CD4-positive, alpha-beta T cell (primary cell): ENCODE measurements at regions of chr1 and their contacts with region 1.

Region 1: GRCh38 chr1:156212833-156213643 is at the start of gene PMF1:
- DNase-seq: peak; percentile 90 to 97 (median 94)
- ATAC-seq: peak; percentile 96
- H3K4me3 ChIP-seq: peak within 1 kb of the TSS; percentile 69
- H3K4me3 Mint-ChIP-seq: peak within 1 kb of the TSS; percentile 98
- H3K27ac ChIP-seq: peak within 1 kb of the TSS; percentile 90 to 98
- H3K27ac Mint-ChIP-seq: peak within 1 kb of the TSS; percentile 99
- H3K4me1 ChIP-seq: peaks cover 46% of the 10 kb centered on the region
- H3K4me1 Mint-ChIP-seq: peaks cover 37% of the 10 kb centered on the region
- H3K27me3 ChIP-seq: no peaks in the 10 kb centered on the region
- H3K27me3 Mint-ChIP-seq: no peaks in the 10 kb centered on the region
- CTCF ChIP-seq: no peak
- total RNA-seq, gene PMF1: 58.0 to 61.2 TPM

Region 2: GRCh38 chr1:155925506-155925905 is 287.5 kb before region 1 on chr1:
- CTCF ChIA-PET with region 1: no interaction called
- POLR2A ChIA-PET with region 1: no interaction called
- intact Hi-C with region 1: no loop called
- DNase-seq: no peak
- ATAC-seq: no peak
- H3K4me3 ChIP-seq: no peak overlapping the region
- H3K4me3 Mint-ChIP-seq: no peak overlapping the region
- H3K27ac ChIP-seq: no peak overlapping the region
- H3K27ac Mint-ChIP-seq: no peak overlapping the region
- H3K4me1 ChIP-seq: peaks cover under 1% of the 10 kb centered on the region
- H3K4me1 Mint-ChIP-seq: peaks cover 13% of the 10 kb centered on the region
- H3K27me3 ChIP-seq: no peaks in the 10 kb centered on the region
- H3K27me3 Mint-ChIP-seq: no peaks in the 10 kb centered on the region
- CTCF ChIP-seq: no peak

Region 3: GRCh38 chr1:155978325-155978972 is 234.6 kb before region 1 on chr1 and contains the start of gene ARHGEF2:
- CTCF ChIA-PET with region 1: no interaction called
- POLR2A ChIA-PET with region 1: interaction called, 11 read pairs
- intact Hi-C with region 1: no loop called
- DNase-seq: peak; percentile 42 to 86 (median 75)
- ATAC-seq: peak; percentile 59
- H3K4me3 ChIP-seq: peak within 1 kb of the TSS; percentile 93
- H3K4me3 Mint-ChIP-seq: peak within 1 kb of the TSS; percentile 97
- H3K27ac ChIP-seq: peak within 1 kb of the TSS; percentile 66 to 89
- H3K27ac Mint-ChIP-seq: peak within 1 kb of the TSS; percentile 86
- H3K4me1 ChIP-seq: peaks cover 78% of the 10 kb centered on the region
- H3K4me1 Mint-ChIP-seq: peaks cover 75% of the 10 kb centered on the region
- H3K27me3 ChIP-seq: no peaks in the 10 kb centered on the region
- H3K27me3 Mint-ChIP-seq: no peaks in the 10 kb centered on the region
- CTCF ChIP-seq: peak; percentile 21
- total RNA-seq, gene ARHGEF2: 54.8 to 62.4 TPM

Region 4: GRCh38 chr1:156020292-156021089 is 192.5 kb before region 1 on chr1 and contains the start of gene SSR2:
- CTCF ChIA-PET with region 1: no interaction called
- POLR2A ChIA-PET with region 1: no interaction called
- intact Hi-C with region 1: no loop called
- DNase-seq: peak; percentile 61 to 94 (median 77)
- ATAC-seq: peak; percentile 99
- H3K4me3 ChIP-seq: peak within 1 kb of the TSS; percentile 78
- H3K4me3 Mint-ChIP-seq: peak within 1 kb of the TSS; percentile 100
- H3K27ac ChIP-seq: peak within 1 kb of the TSS; percentile 38 to 77
- H3K27ac Mint-ChIP-seq: peak within 1 kb of the TSS; percentile 91
- H3K4me1 ChIP-seq: peaks cover 18% of the 10 kb centered on the region
- H3K4me1 Mint-ChIP-seq: peaks cover 41% of the 10 kb centered on the region
- H3K27me3 ChIP-seq: no peaks in the 10 kb centered on the region
- H3K27me3 Mint-ChIP-seq: no peaks in the 10 kb centered on the region
- CTCF ChIP-seq: no peak
- total RNA-seq, gene SSR2: 223 to 225 TPM

Region 5: GRCh38 chr1:156160743-156161171 is 52.3 kb before region 1 on chr1:
- CTCF ChIA-PET with region 1: no interaction called
- POLR2A ChIA-PET with region 1: interaction called, 11 read pairs
- intact Hi-C with region 1: no loop called
- DNase-seq: peak in 13 of 14 experiments; percentile 23 to 81 (median 53)
- ATAC-seq: peak; percentile 79
- H3K4me3 ChIP-seq: peak overlapping the region; percentile 53
- H3K4me3 Mint-ChIP-seq: peak overlapping the region; percentile 84
- H3K27ac ChIP-seq: no peak overlapping the region
- H3K27ac Mint-ChIP-seq: peak overlapping the region; percentile 54
- H3K4me1 ChIP-seq: peaks cover 32% of the 10 kb centered on the region
- H3K4me1 Mint-ChIP-seq: peaks cover 53% of the 10 kb centered on the region
- H3K27me3 ChIP-seq: no peaks in the 10 kb centered on the region
- H3K27me3 Mint-ChIP-seq: no peaks in the 10 kb centered on the region
- CTCF ChIP-seq: no peak

Region 6: DNA sequence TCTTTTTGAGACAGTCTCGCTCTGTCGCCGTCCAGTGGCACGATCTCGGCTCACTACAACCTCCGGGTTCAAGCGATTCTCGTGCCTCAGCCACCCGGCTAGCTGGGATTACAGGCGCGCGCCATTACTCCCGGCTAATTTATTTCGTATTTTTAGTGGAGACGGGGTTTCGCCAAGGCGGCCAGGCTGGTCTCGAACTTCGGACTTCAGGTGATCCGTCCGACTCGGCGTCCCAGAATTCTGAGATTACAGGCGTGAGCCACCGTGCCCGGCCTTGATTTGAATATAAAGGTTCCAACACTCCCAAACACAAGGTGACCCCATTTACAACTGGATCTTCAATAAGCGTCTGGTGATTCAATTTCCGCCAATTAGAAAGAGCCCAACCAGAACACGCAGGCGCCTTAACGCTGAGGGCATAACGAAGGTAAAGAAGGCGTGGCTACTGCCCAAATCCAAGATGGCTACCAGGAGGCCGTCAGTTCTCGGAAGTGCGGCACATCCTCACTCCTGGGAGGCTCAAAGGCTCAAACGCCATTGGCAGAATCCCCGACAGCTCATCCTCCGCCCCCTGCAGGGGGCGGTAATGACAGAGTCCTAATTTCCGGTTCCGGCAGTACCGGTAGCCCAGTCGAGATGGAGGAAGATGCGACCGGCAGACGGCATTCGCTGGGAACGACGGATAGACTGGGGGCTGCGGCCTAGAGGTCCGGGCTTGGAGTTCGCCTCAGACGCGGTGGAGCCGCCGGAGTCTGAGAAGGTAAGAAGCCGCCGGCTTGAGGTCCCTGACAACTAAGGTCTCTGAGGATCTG is 19.3 kb before region 1 on chr1 and contains the start of gene SLC25A44:
- CTCF ChIA-PET with region 1: interaction called, 3 read pairs
- POLR2A ChIA-PET with region 1: interaction called, 46 read pairs
- intact Hi-C with region 1: loop called (anchors 1 kb)
- DNase-seq: peak; percentile 92 to 99 (median 97)
- ATAC-seq: peak; percentile 98
- H3K4me3 ChIP-seq: peak within 1 kb of the TSS; percentile 91
- H3K4me3 Mint-ChIP-seq: peak within 1 kb of the TSS; percentile 95
- H3K27ac ChIP-seq: peak within 1 kb of the TSS; percentile 74 to 78
- H3K27ac Mint-ChIP-seq: peak within 1 kb of the TSS; percentile 84
- H3K4me1 ChIP-seq: peaks cover 37% of the 10 kb centered on the region
- H3K4me1 Mint-ChIP-seq: peaks cover 39% of the 10 kb centered on the region
- H3K27me3 ChIP-seq: no peaks in the 10 kb centered on the region
- H3K27me3 Mint-ChIP-seq: no peaks in the 10 kb centered on the region
- CTCF ChIP-seq: peak; percentile 46
- total RNA-seq, gene SLC25A44: 11.6 to 13.0 TPM

Region 7: GRCh38 chr1:156226116-156226538 is 13.1 kb after region 1 on chr1:
- CTCF ChIA-PET with region 1: interaction called, 45 read pairs
- POLR2A ChIA-PET with region 1: interaction called, 45 read pairs
- intact Hi-C with region 1: no loop called
- DNase-seq: no peak
- ATAC-seq: no peak
- H3K4me3 ChIP-seq: no peak overlapping the region
- H3K4me3 Mint-ChIP-seq: no peak overlapping the region
- H3K27ac ChIP-seq: no peak overlapping the region
- H3K27ac Mint-ChIP-seq: no peak overlapping the region
- H3K4me1 ChIP-seq: peaks cover 28% of the 10 kb centered on the region
- H3K4me1 Mint-ChIP-seq: peaks cover 29% of the 10 kb centered on the region
- H3K27me3 ChIP-seq: no peaks in the 10 kb centered on the region
- H3K27me3 Mint-ChIP-seq: no peaks in the 10 kb centered on the region
- CTCF ChIP-seq: no peak

Region 8: GRCh38 chr1:156338180-156338973 is 125.3 kb after region 1 on chr1 and contains the starts of genes CCT3 and TSACC:
- CTCF ChIA-PET with region 1: no interaction called
- POLR2A ChIA-PET with region 1: interaction called, 4 read pairs
- intact Hi-C with region 1: loop called in 1 of 2 experiments (anchors 5 kb)
- DNase-seq: peak; percentile 98 to 100 (median 99)
- ATAC-seq: peak; percentile 95
- H3K4me3 ChIP-seq: peak within 1 kb of the TSS; percentile 84
- H3K4me3 Mint-ChIP-seq: peak within 1 kb of the TSS; percentile 87
- H3K27ac ChIP-seq: peak within 1 kb of the TSS; percentile 79 to 96
- H3K27ac Mint-ChIP-seq: peak within 1 kb of the TSS; percentile 88
- H3K4me1 ChIP-seq: peaks cover 23% of the 10 kb centered on the region
- H3K4me1 Mint-ChIP-seq: peaks cover 41% of the 10 kb centered on the region
- H3K27me3 ChIP-seq: no peaks in the 10 kb centered on the region
- H3K27me3 Mint-ChIP-seq: no peaks in the 10 kb centered on the region
- CTCF ChIP-seq: no peak
- total RNA-seq, gene CCT3: 49.6 to 50.2 TPM
- total RNA-seq, gene TSACC: not detected